ENCODE measurements at regions of chr5 and their contacts with region 1.

Region 1: GRCh38 chr5:159156426-159157238 is 52.7 kb downstream of the RNF145 start:
- DNase-seq: peak; percentile 70
- H3K4me3 ChIP-seq: no peak overlapping the region
- H3K27ac ChIP-seq: no peak overlapping the region
- H3K4me1 ChIP-seq: peaks cover 10% of the 10 kb centered on the region
- H3K27me3 ChIP-seq: no peaks in the 10 kb centered on the region
- CTCF ChIP-seq: peak; percentile 64 to 69
- POLR2A ChIP-seq: no peak

Region 2: DNA sequence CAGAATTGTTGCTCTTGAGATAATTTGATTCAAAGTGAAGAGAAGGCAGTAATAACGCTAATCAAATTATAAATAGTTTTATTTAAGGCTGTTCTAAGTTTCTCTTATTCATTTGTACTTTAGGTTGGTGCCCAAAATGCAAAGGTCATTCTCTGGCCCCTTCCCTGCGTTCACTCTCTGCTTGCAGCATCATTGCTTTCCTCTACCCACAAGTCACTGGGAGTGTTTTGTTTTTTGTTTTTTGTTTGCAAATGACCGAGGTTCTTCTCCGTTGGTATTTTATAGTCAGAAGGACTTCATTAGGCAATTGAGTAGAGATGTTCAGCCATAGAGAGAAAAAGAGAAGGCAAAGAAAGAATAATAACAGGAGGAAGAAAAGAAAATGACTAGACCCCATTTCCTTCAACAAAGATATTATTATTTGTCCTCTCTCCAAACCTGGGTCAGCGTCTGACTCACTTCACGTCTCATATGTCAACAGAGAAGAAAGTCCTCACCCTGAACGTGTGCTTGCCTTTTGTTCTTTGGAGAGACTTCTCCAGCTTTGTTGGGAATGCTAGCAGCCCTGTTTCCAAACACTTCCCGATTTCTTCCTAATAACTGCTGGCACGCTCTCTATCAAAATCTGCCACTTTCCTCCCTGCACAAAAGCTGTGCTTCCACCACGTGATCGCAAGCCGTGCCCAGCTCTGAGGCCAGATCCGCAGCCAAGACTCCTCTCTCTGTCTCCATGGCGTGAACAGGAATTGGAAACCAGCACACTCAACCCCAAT is 176.7 kb before region 1 on chr5:
- CTCF ChIA-PET with region 1: no interaction called
- POLR2A ChIA-PET with region 1: no interaction called
- dilution Hi-C with region 1: no loop called
- intact Hi-C with region 1: no loop called
- DNase-seq: peak; percentile 86
- H3K4me3 ChIP-seq: peak overlapping the region in 1 of 3 experiments; percentile 51
- H3K27ac ChIP-seq: peak overlapping the region; percentile 62
- H3K4me1 ChIP-seq: peaks cover 31% of the 10 kb centered on the region
- H3K27me3 ChIP-seq: no peaks in the 10 kb centered on the region
- CTCF ChIP-seq: no peak
- POLR2A ChIP-seq: no peak

Region 3: GRCh38 chr5:159209438-159210305 is 53.0 kb after region 1 on chr5 and contains the start of gene RNF145:
- CTCF ChIA-PET with region 1: interaction called, 47 read pairs
- POLR2A ChIA-PET with region 1: no interaction called
- dilution Hi-C with region 1: no loop called
- intact Hi-C with region 1: loop called (anchors 1 kb)
- DNase-seq: peak; percentile 80
- H3K4me3 ChIP-seq: peak within 1 kb of the TSS; percentile 88 to 97 (median 95)
- H3K27ac ChIP-seq: peak within 1 kb of the TSS; percentile 73
- H3K4me1 ChIP-seq: peaks cover 26% of the 10 kb centered on the region
- H3K27me3 ChIP-seq: no peaks in the 10 kb centered on the region
- CTCF ChIP-seq: no peak
- POLR2A ChIP-seq: peak; percentile 71
- total RNA-seq, gene RNF145: 59.7 and 62.3 TPM in 2 replicates

Region 4: DNA sequence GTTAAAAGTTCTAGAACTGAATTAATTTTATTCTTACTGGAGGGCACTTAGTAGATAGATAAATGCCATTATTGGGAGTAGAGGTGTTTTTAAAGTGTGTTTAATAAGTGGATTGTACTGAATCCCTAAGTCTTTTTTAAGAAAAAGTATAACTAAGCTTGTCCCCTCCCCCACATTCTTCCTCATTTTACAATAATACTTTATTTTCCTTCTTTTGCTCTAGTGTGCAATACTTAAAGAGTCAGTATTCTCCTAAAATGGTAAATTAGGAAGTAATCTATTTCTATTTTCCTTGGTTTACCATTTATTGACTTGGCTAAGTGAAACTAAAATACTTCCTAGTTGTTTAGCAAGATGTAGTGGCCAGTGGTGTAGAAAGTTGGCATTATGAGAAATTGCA is 118.0 kb after region 1 on chr5:
- CTCF ChIA-PET with region 1: interaction called, 24 read pairs
- POLR2A ChIA-PET with region 1: no interaction called
- dilution Hi-C with region 1: no loop called
- intact Hi-C with region 1: loop called (anchors 5 kb)
- DNase-seq: no peak
- H3K4me3 ChIP-seq: no peak overlapping the region
- H3K27ac ChIP-seq: no peak overlapping the region
- H3K4me1 ChIP-seq: no peaks in the 10 kb centered on the region
- H3K27me3 ChIP-seq: no peaks in the 10 kb centered on the region
- CTCF ChIP-seq: no peak
- POLR2A ChIP-seq: no peak

Region 5: DNA sequence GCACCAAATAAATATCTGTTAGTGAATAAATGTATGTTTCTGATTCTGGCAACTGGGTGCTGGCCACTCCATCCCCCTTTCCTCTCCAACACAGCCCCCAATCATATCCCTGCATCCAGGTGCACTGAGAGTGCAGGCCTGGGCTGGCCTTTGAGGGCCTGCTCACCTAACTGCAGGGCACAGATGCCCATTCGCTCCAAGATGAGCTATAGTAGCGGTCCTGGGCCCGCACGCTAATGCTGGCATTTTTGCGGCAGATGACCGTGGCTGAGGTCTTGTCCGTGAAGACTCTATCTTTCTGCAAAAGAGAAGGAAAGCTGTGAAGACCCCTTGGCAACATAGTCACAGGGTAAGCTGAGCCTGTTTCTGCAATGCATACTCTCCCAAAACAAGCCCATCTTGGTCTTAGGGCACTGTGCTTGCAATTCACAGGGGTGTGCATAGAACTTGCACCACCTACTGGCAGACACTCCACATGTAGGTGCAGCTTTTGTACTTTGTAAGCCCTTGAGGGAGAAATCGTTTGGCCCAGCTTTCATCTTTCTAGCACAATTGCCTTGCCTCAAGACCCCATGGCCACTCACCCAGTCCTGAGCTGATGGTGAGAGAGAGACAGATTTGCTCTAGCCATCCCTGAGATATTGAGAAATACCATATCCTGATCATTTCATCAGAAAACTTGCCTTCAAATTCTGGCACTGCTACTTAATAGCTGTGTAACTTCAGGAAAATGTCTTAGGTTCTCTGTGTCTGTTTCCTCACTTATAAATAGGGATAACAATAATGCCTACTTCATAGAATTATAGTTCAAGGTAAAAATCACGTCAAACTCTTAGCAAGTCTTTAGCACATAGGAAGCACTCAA is 160.1 kb after region 1 on chr5:
- CTCF ChIA-PET with region 1: interaction called, 164 read pairs
- POLR2A ChIA-PET with region 1: no interaction called
- dilution Hi-C with region 1: no loop called
- intact Hi-C with region 1: loop called (anchors 1 kb)
- DNase-seq: peak; percentile 51
- H3K4me3 ChIP-seq: no peak overlapping the region
- H3K27ac ChIP-seq: no peak overlapping the region
- H3K4me1 ChIP-seq: no peaks in the 10 kb centered on the region
- H3K27me3 ChIP-seq: peaks cover 4 to 5% of the 10 kb centered on the region in 2 experiments
- CTCF ChIP-seq: peak; percentile 33 to 69
- POLR2A ChIP-seq: no peak

Region 6: GRCh38 chr5:159965031-159965837 is 808.6 kb after region 1 on chr5:
- CTCF ChIA-PET with region 1: interaction called, 10 read pairs
- POLR2A ChIA-PET with region 1: no interaction called
- dilution Hi-C with region 1: no loop called
- intact Hi-C with region 1: loop called (anchors 1 kb)
- DNase-seq: peak; percentile 37
- H3K4me3 ChIP-seq: no peak overlapping the region
- H3K27ac ChIP-seq: no peak overlapping the region
- H3K4me1 ChIP-seq: no peaks in the 10 kb centered on the region
- H3K27me3 ChIP-seq: peaks cover 5 to 10% of the 10 kb centered on the region in 2 experiments
- CTCF ChIP-seq: peak; percentile 50 to 57
- POLR2A ChIP-seq: no peak

Measured in endothelial cell of umbilical vein (primary cell).